HEK293 (cell line): ENCODE measurements at regions of chr7 and their contacts with region 1.

Region 1: GRCh38 chr7:1225441-1226185 is 7.1 kb upstream of the UNCX start:
- H3K4me3 ChIP-seq: no peak overlapping the region
- H3K27ac ChIP-seq: no peak overlapping the region
- H3K4me1 ChIP-seq: no peaks in the 10 kb centered on the region
- CTCF ChIP-seq: no peak

Region 2: GRCh38 chr7:1210321-1210978 is 15.2 kb before region 1 on chr7:
- CTCF ChIA-PET with region 1: interaction called, 11 read pairs
- POLR2A ChIA-PET with region 1: interaction called, 3 read pairs
- H3K4me3 ChIP-seq: no peak overlapping the region
- H3K27ac ChIP-seq: peak overlapping the region; percentile 34; the same call in 1 of the 2 replicates
- H3K4me1 ChIP-seq: peaks cover 5% of the 10 kb centered on the region
- CTCF ChIP-seq: no peak

Region 3: DNA sequence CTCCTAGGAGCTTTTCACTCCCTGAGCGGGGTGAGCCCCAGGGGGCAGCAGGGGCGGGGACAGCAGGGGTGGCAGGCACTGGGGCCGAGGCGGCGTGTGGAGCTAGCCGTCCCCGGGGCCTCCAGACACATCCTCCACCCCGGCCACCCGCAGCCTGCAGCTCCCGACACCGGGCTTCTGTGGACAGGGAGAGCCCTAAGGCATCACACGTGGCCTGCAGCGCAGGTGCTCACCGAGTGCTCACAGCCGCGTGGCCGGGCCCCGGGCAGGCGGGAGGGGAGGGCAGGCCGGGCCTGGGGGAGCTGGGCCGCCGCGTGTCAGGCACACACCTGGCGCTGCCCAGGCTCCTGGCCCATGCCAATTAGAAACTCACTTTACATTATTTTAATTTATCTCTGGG is 182.3 kb after region 1 on chr7:
- CTCF ChIA-PET with region 1: interaction called, 12 read pairs
- POLR2A ChIA-PET with region 1: no interaction called
- H3K4me3 ChIP-seq: no peak overlapping the region
- H3K27ac ChIP-seq: no peak overlapping the region
- H3K4me1 ChIP-seq: peaks cover 6% of the 10 kb centered on the region
- CTCF ChIP-seq: no peak

Region 4: GRCh38 chr7:1473864-1474512 is 248.4 kb after region 1 on chr7:
- CTCF ChIA-PET with region 1: interaction called, 11 read pairs
- POLR2A ChIA-PET with region 1: no interaction called
- H3K4me3 ChIP-seq: no peak overlapping the region
- H3K27ac ChIP-seq: no peak overlapping the region; the same call in 1 of the 2 replicates
- H3K4me1 ChIP-seq: no peaks in the 10 kb centered on the region
- CTCF ChIP-seq: peak; percentile 94